ENCODE measurements at regions of chr21 and their contacts with region 1.

Region 1: DNA sequence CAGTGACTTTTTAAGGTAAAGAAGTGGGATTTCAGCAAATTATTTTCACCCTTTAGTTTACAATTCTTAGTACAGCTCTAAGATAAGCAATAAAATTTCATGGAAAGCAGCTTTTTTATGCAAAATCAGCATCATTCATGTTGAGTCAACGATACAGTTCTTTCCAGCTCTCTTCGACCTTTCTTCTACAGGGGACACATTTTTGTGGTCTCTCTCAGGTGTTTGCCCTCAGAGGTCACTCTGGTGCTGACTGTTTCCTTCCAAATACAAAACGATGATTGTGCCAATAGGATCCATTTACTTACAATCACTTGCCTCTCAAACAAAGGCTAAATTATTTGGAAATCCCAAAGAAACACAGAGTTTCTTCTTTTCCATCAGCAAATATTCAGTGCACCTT is 51.0 kb downstream of the PSMG1 start:
- DNase-seq: no peak
- ATAC-seq: peak in 1 of 4 donors; percentile 23
- H3K4me3 ChIP-seq: no peak overlapping the region
- H3K27ac ChIP-seq: no peak overlapping the region
- H3K4me1 ChIP-seq: peaks cover 0 to 2% (median 0%) of the 10 kb centered on the region in 4 donors
- H3K27me3 ChIP-seq: no peaks in the 10 kb centered on the region
- CTCF ChIP-seq: no peak
- POLR2A ChIP-seq: no peak

Region 2: GRCh38 chr21:38733973-38734546 is 398.2 kb before region 1 on chr21:
- intact Hi-C with region 1: loop called in 1 of 2 experiments (anchors 5 kb)
- DNase-seq: peak; percentile 87 to 90 (median 88)
- ATAC-seq: peak; percentile 94 to 99 (median 97)
- H3K4me3 ChIP-seq: peak overlapping the region in 1 of 3 donors; percentile 17
- H3K27ac ChIP-seq: peak overlapping the region; percentile 35 to 63 (median 41)
- H3K4me1 ChIP-seq: peaks cover 0 to 3% (median 0%) of the 10 kb centered on the region in 4 donors
- H3K27me3 ChIP-seq: no peaks in the 10 kb centered on the region
- CTCF ChIP-seq: peak; percentile 94 to 95 (median 94)
- POLR2A ChIP-seq: no peak

Region 3: DNA sequence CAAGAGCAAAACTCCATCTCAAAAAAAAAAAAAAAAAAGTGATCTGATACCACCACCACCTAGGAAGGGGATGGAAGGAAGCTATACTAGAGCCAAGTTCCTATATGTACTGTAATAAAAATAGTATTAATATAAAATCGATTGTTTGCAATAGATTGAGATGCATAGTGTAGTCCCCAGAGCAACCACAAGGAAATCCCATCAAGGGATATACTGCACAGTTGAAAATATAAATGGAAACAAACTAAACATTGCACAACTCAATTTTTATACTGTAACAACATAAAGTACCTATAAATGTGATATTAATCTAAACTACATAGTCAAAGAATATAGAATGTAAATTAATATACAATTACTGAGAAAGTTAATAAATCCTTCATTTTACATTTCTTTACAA is 71.9 kb after region 1 on chr21:
- intact Hi-C with region 1: no loop called
- DNase-seq: no peak
- ATAC-seq: no peak
- H3K4me3 ChIP-seq: no peak overlapping the region
- H3K27ac ChIP-seq: no peak overlapping the region
- H3K4me1 ChIP-seq: no peaks in the 10 kb centered on the region
- H3K27me3 ChIP-seq: no peaks in the 10 kb centered on the region
- CTCF ChIP-seq: no peak
- POLR2A ChIP-seq: no peak